Activated CD4-positive, alpha-beta T cell treated with anti-CD3 and anti-CD28 coated beads for 36 hours (primary cell): ENCODE measurements at regions of chr5 and their contacts with region 1.

Region 1: GRCh38 chr5:34522599-34523386 is 133.3 kb upstream of the RAI14 start:
- DNase-seq: peak; percentile 75
- ATAC-seq: peak; percentile 65
- H3K4me3 Mint-ChIP-seq: no peak overlapping the region
- H3K27ac Mint-ChIP-seq: no peak overlapping the region
- H3K4me1 Mint-ChIP-seq: peaks cover 3% of the 10 kb centered on the region
- H3K27me3 Mint-ChIP-seq: peaks cover 14% of the 10 kb centered on the region

Region 2: DNA sequence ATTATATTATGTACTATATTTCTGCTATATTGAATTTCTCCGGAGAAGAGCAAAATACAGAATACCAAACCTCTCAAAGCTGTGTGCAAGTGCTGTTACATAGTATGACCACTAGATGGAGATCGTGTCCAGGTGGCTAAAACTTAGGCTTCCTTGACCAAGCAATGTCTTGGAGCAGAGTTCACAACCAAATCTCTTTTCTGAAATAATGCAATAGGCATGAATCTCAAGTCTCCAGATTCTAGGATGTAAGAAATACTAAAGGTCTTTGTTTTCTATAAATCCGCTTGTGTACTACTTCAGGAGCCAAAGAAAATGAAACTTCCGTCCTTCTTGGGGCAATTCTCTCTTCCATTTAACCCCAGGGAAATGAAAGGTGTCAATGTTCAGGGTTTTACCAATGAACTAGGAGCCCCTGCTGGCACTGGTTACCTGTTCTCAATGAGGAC is 48.2 kb before region 1 on chr5:
- CTCF ChIA-PET with region 1: interaction called, 15 read pairs
- POLR2A ChIA-PET with region 1: no interaction called
- intact Hi-C with region 1: no loop called
- DNase-seq: no peak
- ATAC-seq: peak; percentile 49
- H3K4me3 Mint-ChIP-seq: no peak overlapping the region
- H3K27ac Mint-ChIP-seq: no peak overlapping the region
- H3K4me1 Mint-ChIP-seq: no peaks in the 10 kb centered on the region
- H3K27me3 Mint-ChIP-seq: peaks cover 16% of the 10 kb centered on the region

Region 3: DNA sequence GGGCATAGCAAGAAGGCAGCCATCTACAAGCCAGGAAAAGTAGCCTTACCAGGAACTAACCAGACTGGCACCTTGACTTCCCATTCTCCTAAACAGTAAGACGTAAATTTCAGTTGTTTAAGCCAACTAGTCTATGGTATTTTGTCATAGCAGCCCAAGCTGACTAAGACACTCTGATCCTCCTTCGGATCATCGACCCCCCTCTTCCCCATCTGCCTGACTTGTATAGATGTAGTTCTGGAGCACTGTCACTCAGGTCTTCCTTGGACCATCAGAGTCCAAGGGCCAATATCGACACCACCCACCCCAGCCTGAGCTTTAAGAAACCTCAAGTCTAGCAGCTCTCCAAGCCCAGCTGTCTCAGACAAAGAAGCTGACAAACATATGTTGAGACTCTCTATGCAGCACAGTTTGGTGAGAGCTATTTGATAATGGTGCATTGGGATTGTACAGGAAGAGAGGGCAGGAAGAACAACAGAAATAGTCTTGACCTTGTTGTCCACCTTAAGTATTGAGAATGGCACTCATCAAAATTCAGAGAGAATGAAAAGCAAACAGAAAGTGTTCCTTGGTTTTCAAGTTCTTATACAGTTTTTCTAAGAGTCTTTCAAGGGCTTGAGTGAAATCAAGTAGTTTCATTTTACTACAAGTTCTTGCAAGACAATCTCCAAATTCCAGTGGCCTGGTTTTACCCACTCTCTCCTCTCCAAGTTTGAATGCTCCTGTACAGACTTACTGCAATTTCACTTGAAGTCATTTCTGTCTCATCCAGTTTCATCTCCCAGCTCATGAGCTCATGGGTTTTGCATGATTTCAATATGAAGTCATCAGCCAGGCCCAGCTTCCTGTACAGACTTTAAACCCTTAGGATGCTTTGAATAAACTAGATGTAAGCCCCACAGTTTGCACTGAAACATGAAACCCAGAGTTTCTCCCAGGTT is 11.1 kb after region 1 on chr5:
- CTCF ChIA-PET with region 1: interaction called, 27 read pairs
- POLR2A ChIA-PET with region 1: no interaction called
- intact Hi-C with region 1: no loop called
- DNase-seq: peak; percentile 56
- ATAC-seq: peak; percentile 77
- H3K4me3 Mint-ChIP-seq: no peak overlapping the region
- H3K27ac Mint-ChIP-seq: peak overlapping the region; percentile 76
- H3K4me1 Mint-ChIP-seq: peaks cover 41% of the 10 kb centered on the region
- H3K27me3 Mint-ChIP-seq: peaks cover 5% of the 10 kb centered on the region

Region 4: DNA sequence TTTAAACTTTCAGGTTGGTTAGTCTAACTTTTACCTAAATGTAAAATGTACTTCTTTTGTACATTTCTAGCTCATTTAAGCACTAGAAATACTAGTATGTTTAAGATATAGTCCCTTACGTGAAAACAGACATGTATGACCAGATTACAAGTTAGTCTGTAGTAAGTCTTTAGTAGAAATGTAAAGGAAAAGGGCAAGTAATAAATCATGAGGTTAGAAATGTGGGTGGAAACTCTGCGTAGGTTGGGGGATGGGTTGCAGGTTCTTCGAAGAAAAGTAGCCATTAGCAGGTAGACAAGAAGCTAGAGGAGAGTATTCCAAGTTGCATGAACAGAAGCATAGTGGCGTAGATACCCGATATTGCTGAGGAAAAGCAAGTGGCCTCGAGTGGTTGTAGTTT is 369.6 kb after region 1 on chr5:
- CTCF ChIA-PET with region 1: interaction called, 55 read pairs
- POLR2A ChIA-PET with region 1: no interaction called
- intact Hi-C with region 1: no loop called
- DNase-seq: no peak
- ATAC-seq: no peak
- H3K4me3 Mint-ChIP-seq: no peak overlapping the region
- H3K27ac Mint-ChIP-seq: no peak overlapping the region
- H3K4me1 Mint-ChIP-seq: no peaks in the 10 kb centered on the region
- H3K27me3 Mint-ChIP-seq: no peaks in the 10 kb centered on the region

Region 5: DNA sequence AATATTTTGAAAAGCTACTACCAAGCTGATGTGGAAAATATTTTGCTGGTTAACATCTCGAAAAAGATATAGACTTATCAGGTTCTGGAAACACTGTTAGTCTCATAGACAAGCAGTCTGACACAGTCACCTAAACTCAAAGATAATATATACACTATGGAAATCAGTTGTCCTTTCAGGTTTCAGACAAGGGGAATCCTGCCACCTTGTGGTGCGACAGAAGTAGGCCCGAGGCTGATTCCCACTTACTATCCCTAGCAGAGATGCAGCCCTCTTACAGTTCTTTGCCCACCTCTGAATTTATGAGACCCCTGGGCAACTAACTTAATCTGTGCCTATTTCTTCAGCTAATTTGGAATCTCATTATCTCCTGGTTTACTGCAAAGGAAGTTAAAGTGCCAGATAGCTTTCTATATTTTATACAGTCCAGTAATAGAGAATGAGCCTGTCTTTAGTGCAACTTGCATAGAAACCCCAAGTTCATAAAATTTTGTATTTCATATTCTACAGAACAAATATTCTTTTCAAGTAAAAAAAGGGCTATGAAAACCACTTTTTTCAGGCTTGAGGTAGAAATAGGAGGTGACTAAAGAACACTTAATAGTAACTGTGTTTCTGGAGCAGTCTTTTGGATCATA is 375.6 kb after region 1 on chr5:
- CTCF ChIA-PET with region 1: interaction called, 55 read pairs
- POLR2A ChIA-PET with region 1: no interaction called
- intact Hi-C with region 1: loop called (anchors 1 kb)
- DNase-seq: peak; percentile 77
- ATAC-seq: peak; percentile 86
- H3K4me3 Mint-ChIP-seq: no peak overlapping the region
- H3K27ac Mint-ChIP-seq: no peak overlapping the region
- H3K4me1 Mint-ChIP-seq: no peaks in the 10 kb centered on the region
- H3K27me3 Mint-ChIP-seq: no peaks in the 10 kb centered on the region

Region 6: GRCh38 chr5:35003018-35003957 is 480.5 kb after region 1 on chr5:
- CTCF ChIA-PET with region 1: interaction called, 7 read pairs
- POLR2A ChIA-PET with region 1: no interaction called
- intact Hi-C with region 1: loop called in 1 of 2 experiments (anchors 2 kb)
- DNase-seq: peak; percentile 79
- ATAC-seq: peak; percentile 72
- H3K4me3 Mint-ChIP-seq: no peak overlapping the region
- H3K27ac Mint-ChIP-seq: no peak overlapping the region
- H3K4me1 Mint-ChIP-seq: no peaks in the 10 kb centered on the region
- H3K27me3 Mint-ChIP-seq: peaks cover 20% of the 10 kb centered on the region

Region 7: DNA sequence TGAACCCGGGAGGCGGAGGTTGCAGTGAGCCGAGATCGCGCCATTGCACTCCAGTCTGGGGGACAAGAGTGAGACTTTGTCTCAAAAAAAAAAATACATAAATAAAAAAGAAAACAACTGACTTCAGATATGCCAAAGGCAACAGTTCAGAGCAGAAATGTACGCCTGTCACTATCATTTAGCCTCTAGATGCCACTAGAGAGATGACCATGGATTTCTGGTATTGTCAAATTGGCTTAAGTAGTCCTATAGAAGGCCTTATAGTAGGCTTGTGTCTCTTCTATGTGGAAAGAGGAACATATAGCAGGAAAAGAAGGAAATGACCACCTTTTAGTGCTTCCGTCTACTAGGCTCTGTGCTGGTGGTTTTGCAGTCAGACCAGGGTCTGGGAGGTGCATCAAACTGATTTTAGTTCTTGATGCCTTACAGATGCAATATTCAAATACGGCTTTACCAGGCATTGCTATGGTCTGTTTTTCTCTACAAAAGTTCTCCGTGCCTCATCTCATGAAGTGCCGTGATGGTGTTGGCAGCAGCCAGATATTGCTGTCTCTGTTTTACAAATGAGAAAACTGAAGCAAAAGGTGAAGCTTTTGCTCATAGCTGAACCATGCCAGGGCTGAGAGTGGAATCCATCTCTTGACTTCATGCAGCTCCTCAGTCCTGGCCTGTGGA is 507.8 kb after region 1 on chr5:
- CTCF ChIA-PET with region 1: no interaction called
- POLR2A ChIA-PET with region 1: no interaction called
- intact Hi-C with region 1: no loop called
- DNase-seq: no peak
- ATAC-seq: no peak
- H3K4me3 Mint-ChIP-seq: no peak overlapping the region
- H3K27ac Mint-ChIP-seq: no peak overlapping the region
- H3K4me1 Mint-ChIP-seq: no peaks in the 10 kb centered on the region
- H3K27me3 Mint-ChIP-seq: peaks cover 21% of the 10 kb centered on the region